AG04450 (cell line): ENCODE measurements at regions of chr6 and their contacts with region 1.

Region 1: GRCh38 chr6:31827286-31828079 is at the start of gene HSPA1B:
- DNase-seq: peak; percentile 99
- H3K4me3 ChIP-seq: peak within 1 kb of the TSS; percentile 79
- H3K27ac ChIP-seq: peak within 1 kb of the TSS; percentile 90
- H3K27me3 ChIP-seq: no peaks in the 10 kb centered on the region
- CTCF ChIP-seq: no peak
- polyA plus RNA-seq, gene HSPA1B: 31.9 TPM in 2 replicates

Region 2: GRCh38 chr6:31597006-31597405 is 230.5 kb before region 1 on chr6:
- CTCF ChIA-PET with region 1: interaction called, 5 read pairs
- POLR2A ChIA-PET with region 1: interaction called, 10 read pairs
- DNase-seq: no peak
- H3K4me3 ChIP-seq: no peak overlapping the region
- H3K27ac ChIP-seq: no peak overlapping the region
- H3K27me3 ChIP-seq: no peaks in the 10 kb centered on the region
- CTCF ChIP-seq: peak; percentile 47

Region 3: DNA sequence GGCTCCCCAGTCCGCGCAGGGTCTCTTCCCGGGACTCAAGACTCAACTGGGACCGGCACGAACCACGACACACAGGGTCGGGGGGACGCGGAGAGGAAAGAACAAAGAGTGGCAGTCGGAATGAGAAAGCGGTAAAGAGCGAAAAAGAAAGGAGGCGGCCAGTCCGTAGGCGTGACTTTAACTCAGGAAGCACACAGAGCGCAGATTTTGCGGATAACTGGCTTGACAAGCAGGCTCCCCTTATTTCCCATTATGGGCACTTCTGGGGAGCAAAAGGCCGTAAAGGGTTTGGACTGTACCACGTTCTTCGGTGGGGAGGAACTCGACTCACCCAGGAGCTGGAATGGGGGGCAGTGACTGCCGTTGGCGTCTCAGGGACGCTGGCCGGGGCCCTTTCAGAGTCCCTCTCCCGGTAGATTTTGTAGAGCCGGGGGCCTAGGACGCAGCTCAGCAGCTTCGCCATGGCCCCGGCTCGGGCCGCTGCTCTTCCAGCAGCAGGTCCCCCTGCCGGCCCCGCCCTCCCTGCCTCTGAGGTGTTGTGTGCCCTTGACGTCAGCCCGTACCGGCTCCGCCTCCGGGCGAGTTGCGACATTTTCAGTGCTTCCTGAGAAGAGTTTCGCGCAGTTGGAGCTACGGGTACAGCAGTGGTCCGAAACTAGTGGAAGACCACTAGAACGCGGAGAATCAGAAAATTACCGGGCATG is 124.5 kb before region 1 on chr6 and contains the start of gene ABHD16A:
- CTCF ChIA-PET with region 1: interaction called, 12 read pairs
- POLR2A ChIA-PET with region 1: interaction called, 9 read pairs
- DNase-seq: peak; percentile 95
- H3K4me3 ChIP-seq: peak within 1 kb of the TSS; percentile 98
- H3K27ac ChIP-seq: peak within 1 kb of the TSS; percentile 94
- H3K27me3 ChIP-seq: no peaks in the 10 kb centered on the region
- CTCF ChIP-seq: no peak
- polyA plus RNA-seq, gene ABHD16A: 34.0 and 36.3 TPM in 2 replicates

Region 4: DNA sequence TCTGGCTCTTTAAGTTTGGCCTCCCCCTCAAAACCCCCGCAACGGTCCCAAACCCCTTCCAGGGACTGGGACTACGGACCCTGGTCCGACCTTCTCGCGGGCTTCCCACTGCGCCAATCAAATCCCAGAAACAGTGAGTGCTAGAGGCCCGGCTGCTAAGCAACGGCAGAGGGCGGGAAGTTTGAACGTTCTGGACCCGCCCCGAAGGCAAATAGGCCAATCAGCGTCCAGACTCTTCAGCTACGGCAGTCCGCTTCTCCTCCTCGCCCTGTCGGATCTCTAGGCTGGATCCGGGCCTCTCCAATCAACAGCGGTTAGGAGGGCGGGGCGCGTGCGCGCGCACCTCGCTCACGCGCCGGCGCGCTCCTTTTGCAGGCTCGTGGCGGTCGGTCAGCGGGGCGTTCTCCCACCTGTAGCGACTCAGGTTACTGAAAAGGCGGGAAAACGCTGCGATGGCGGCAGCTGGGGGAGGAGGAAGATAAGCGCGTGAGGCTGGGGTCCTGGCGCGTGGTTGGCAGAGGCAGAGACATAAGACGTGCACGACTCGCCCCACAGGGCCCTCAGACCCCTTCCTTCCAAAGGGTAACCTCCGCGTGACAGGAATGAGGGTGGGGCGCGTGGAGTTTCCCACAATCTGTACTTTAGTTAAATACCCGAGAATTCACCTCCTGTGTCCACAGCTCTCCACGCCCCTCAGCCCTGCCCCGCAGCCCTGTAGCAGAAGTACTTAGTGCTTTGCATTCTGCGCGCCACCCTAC is 87.7 kb before region 1 on chr6 and contains the start of gene MSH5:
- CTCF ChIA-PET with region 1: interaction called, 6 read pairs
- POLR2A ChIA-PET with region 1: interaction called, 14 read pairs
- DNase-seq: peak; percentile 98
- H3K4me3 ChIP-seq: peak within 1 kb of the TSS; percentile 90
- H3K27ac ChIP-seq: no peak within 1 kb of the TSS
- H3K27me3 ChIP-seq: no peaks in the 10 kb centered on the region
- CTCF ChIP-seq: no peak
- polyA plus RNA-seq, gene MSH5: 6.4 and 7.2 TPM in 2 replicates

Region 5: GRCh38 chr6:31795616-31796298 is 31.7 kb before region 1 on chr6 and contains the start of gene VARS1:
- CTCF ChIA-PET with region 1: interaction called, 9 read pairs
- POLR2A ChIA-PET with region 1: interaction called, 27 read pairs
- DNase-seq: peak; percentile 62
- H3K4me3 ChIP-seq: peak within 1 kb of the TSS; percentile 84
- H3K27ac ChIP-seq: peak within 1 kb of the TSS; percentile 77
- H3K27me3 ChIP-seq: no peaks in the 10 kb centered on the region
- CTCF ChIP-seq: peak; percentile 72
- polyA plus RNA-seq, gene VARS1: 16.0 and 23.9 TPM in 2 replicates

Region 6: DNA sequence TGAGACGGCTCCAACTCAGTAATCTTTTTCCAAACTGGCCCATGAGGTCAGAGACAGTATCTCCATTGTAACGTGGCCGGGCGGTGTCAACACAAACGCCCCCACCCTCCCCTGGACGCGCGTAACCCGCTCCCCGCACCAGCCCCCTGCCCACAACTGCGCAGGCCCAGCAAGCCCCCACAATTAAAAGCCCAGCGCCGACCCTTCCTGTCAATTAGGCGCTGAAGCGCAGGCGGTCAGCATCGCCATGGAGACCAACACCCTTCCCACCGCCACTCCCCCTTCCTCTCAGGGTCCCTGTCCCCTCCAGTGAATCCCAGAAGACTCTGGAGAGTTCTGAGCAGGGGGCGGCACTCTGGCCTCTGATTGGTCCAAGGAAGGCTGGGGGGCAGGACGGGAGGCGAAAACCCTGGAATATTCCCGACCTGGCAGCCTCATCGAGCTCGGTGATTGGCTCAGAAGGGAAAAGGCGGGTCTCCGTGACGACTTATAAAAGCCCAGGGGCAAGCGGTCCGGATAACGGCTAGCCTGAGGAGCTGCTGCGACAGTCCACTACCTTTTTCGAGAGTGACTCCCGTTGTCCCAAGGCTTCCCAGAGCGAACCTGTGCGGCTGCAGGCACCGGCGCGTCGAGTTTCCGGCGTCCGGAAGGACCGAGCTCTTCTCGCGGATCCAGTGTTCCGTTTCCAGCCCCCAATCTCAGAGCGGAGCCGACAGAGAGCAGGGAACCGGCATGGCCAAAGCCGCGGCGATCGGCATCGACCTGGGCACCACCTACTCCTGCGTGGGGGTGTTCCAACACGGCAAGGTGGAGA is 12.3 kb before region 1 on chr6 and contains the starts of genes HSPA1A and HSPA1L:
- CTCF ChIA-PET with region 1: interaction called, 7 read pairs
- POLR2A ChIA-PET with region 1: interaction called, 53 read pairs
- DNase-seq: peak; percentile 85
- H3K4me3 ChIP-seq: peak within 1 kb of the TSS; percentile 83
- H3K27ac ChIP-seq: peak within 1 kb of the TSS; percentile 92
- H3K27me3 ChIP-seq: no peaks in the 10 kb centered on the region
- CTCF ChIP-seq: no peak
- polyA plus RNA-seq, gene HSPA1A: 46.6 and 50.4 TPM in 2 replicates
- polyA plus RNA-seq, gene HSPA1L: 1.1 and 1.2 TPM in 2 replicates

Region 7: GRCh38 chr6:31888276-31889258 is 61.1 kb after region 1 on chr6:
- CTCF ChIA-PET with region 1: no interaction called
- POLR2A ChIA-PET with region 1: interaction called, 14 read pairs
- DNase-seq: no peak
- H3K4me3 ChIP-seq: no peak overlapping the region
- H3K27ac ChIP-seq: no peak overlapping the region
- H3K27me3 ChIP-seq: no peaks in the 10 kb centered on the region
- CTCF ChIP-seq: peak; percentile 74